ENCODE measurements at regions of chr17 and their contacts with region 1.

Region 1: DNA sequence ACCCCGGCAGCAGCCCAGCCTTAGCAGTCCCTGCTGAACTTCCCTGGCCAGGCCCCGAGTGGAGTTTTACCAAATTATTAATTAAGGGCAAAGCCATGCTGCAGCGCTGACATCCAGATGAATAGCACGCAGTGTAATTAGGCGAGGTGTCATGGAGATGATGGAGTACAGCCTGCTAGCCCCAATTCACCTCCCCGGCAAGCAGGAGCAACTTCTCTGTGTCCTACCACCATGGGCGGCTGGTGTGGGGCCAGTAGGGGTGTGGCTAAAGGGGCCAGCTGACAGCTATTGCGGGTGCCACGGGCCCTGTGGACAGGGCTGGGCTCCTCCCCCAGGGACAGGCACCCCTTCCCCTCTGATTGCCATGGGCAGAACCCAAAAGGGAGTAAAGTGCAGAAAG is 24.5 kb downstream of the ENDOV start:
- DNase-seq: no peak
- ATAC-seq: no peak
- H3K4me3 ChIP-seq: no peak overlapping the region
- H3K27ac ChIP-seq: no peak overlapping the region
- H3K4me1 ChIP-seq: no peaks in the 10 kb centered on the region
- H3K27me3 ChIP-seq: peaks cover 0 to 7% (median 0%) of the 10 kb centered on the region in 7 donors
- CTCF ChIP-seq: no peak

Region 2: GRCh38 chr17:80959330-80960036 is 520.0 kb after region 1 on chr17:
- intact Hi-C with region 1: loop called in 1 of 10 experiments (anchors 5 kb)
- DNase-seq: peak; percentile 86 to 89
- ATAC-seq: peak; percentile 90 to 96 (median 95)
- H3K4me3 ChIP-seq: peak overlapping the region in 3 of 10 donors; percentile 1 to 18 (median 9)
- H3K27ac ChIP-seq: peak overlapping the region; percentile 75 to 94 (median 90)
- H3K4me1 ChIP-seq: peaks cover 14 to 29% (median 22%) of the 10 kb centered on the region in 9 donors
- H3K27me3 ChIP-seq: no peaks in the 10 kb centered on the region
- CTCF ChIP-seq: peak in 2 of 9 donors; percentile 29 to 34

Measured in heart right ventricle (tissue), 16 donors.